Tibial artery (tissue), 4 donors: ENCODE measurements at regions of chr9 and their contacts with region 1.

Region 1: DNA sequence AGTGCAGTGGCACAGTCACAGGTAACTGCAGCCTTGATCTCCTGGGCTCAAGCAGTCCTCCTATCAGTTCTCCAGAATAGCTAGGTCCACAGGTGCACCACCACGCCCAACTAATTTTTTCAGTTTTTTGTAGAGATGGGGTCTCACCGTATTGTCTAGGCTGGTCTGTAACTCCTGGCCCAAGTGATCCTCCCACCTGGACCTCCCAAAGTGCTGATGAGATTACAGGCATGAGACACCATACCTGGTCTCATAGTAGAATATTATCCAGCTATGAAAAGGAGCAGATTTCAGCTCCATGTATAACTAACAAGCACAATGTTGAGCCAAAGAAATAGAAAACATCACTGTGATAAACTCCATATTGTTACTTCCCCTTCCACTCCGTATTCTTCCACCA is 69.8 kb downstream of the FAM78A start:
- DNase-seq: no peak
- H3K4me3 ChIP-seq: no peak overlapping the region
- H3K27ac ChIP-seq: no peak overlapping the region
- H3K4me1 ChIP-seq: no peaks in the 10 kb centered on the region
- H3K27me3 ChIP-seq: no peaks in the 10 kb centered on the region
- CTCF ChIP-seq: no peak

Region 2: DNA sequence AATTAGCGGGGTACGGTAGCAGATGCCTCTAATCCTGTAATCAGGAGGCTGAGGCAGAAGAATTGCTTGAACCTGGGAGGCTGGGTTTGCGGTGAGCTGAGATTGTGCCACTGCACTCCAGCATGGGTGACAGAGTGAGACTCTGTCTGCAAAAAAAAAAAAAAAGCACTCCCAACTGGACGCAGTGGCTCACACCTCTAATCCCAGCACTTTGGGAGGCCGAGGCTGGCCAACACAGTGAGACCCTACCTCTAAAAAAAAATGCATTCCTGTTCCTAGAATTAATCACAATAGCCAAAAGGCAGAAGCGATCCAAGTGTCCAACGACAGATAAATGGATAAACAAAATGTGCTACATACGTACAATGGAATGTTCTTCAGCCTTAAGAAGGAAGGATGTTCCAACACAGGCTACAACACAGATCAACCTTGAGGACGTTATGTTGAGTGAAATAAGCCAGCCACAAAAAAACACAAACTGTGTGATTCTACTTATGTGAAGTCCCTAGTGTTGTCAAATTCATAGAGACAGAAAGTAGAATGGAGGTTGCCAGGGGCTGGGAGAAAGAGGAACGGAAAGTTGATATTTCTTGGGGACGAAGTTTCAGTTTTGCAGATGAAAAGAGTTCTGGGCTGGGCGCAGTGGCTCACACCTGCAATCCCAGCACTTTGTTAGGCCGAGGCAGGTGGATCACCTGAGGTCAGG is 56.0 kb after region 1 on chr9:
- intact Hi-C with region 1: loop called (anchors 2 kb)
- DNase-seq: no peak
- H3K4me3 ChIP-seq: no peak overlapping the region
- H3K27ac ChIP-seq: no peak overlapping the region
- H3K4me1 ChIP-seq: no peaks in the 10 kb centered on the region
- H3K27me3 ChIP-seq: peaks cover 0 to 4% of the 10 kb centered on the region in 2 donors
- CTCF ChIP-seq: no peak